Transverse colon (tissue), 4 donors: ENCODE measurements at regions of chr2 and their contacts with region 1.

Region 1: GRCh38 chr2:231706731-231707624 is 1.3 kb upstream of the PTMA start:
- DNase-seq: peak; percentile 98
- H3K4me3 ChIP-seq: peak overlapping the region; percentile 61 to 98 (median 74)
- H3K27ac ChIP-seq: peak overlapping the region; percentile 97 to 100 (median 100)
- H3K4me1 ChIP-seq: peaks cover 10 to 33% (median 20%) of the 10 kb centered on the region in 4 donors
- H3K27me3 ChIP-seq: no peaks in the 10 kb centered on the region
- CTCF ChIP-seq: peak; percentile 69 to 93 (median 89)
- EP300 ChIP-seq: no peak
- POLR2A ChIP-seq: peak; percentile 86

Region 2: DNA sequence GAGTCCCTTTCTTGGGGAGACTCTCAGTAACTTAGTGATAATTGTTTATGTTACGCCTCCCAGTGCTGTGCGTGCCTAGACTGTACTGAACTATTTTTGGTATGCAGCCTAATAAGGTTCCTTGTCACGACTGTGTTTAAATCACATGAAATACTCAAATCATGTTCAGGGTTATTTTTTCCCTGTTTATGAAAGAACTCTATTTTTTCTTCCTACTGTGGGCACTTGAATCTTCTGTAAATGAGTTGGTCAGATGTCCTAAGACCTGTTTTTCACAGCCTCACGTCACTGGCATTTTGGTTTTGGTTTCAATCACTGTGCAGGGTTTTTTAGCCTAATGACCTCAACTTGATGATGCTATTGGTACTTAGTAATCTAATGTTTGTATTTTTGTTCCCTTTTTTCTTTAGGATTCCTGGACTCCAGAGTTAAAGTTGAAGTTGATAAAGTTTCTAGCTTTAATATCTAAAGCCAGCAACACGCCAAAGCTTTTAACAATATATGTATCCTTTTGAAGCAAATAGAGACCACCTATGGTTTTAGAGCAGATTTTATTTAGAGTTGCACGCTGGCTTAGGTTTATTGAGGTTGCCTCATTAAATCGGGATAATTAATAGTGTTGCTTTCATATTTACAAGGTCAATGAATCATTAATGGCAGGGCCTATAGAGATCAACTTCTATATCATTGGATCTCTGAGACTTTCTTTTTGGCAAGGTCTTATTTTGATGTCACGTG is 484.5 kb before region 1 on chr2:
- in situ Hi-C with region 1: no loop called
- intact Hi-C with region 1: loop called (anchors 5 kb)
- DNase-seq: no peak
- H3K4me3 ChIP-seq: no peak overlapping the region
- H3K27ac ChIP-seq: peak overlapping the region; percentile 70 to 85 (median 82)
- H3K4me1 ChIP-seq: peaks cover 10 to 34% (median 24%) of the 10 kb centered on the region in 4 donors
- H3K27me3 ChIP-seq: no peaks in the 10 kb centered on the region
- CTCF ChIP-seq: no peak
- EP300 ChIP-seq: no peak
- POLR2A ChIP-seq: no peak

Region 3: GRCh38 chr2:231514103-231514950 is 192.7 kb before region 1 on chr2:
- in situ Hi-C with region 1: loop called in 1 of 4 experiments (anchors 25 kb)
- intact Hi-C with region 1: loop called (anchors 10 kb)
- DNase-seq: peak; percentile 98
- H3K4me3 ChIP-seq: peak overlapping the region; percentile 57 to 91 (median 59)
- H3K27ac ChIP-seq: peak overlapping the region; percentile 85 to 93 (median 89)
- H3K4me1 ChIP-seq: peaks cover 0 to 14% (median 6%) of the 10 kb centered on the region in 4 donors
- H3K27me3 ChIP-seq: no peaks in the 10 kb centered on the region
- CTCF ChIP-seq: no peak
- EP300 ChIP-seq: no peak
- POLR2A ChIP-seq: peak; percentile 86

Region 4: DNA sequence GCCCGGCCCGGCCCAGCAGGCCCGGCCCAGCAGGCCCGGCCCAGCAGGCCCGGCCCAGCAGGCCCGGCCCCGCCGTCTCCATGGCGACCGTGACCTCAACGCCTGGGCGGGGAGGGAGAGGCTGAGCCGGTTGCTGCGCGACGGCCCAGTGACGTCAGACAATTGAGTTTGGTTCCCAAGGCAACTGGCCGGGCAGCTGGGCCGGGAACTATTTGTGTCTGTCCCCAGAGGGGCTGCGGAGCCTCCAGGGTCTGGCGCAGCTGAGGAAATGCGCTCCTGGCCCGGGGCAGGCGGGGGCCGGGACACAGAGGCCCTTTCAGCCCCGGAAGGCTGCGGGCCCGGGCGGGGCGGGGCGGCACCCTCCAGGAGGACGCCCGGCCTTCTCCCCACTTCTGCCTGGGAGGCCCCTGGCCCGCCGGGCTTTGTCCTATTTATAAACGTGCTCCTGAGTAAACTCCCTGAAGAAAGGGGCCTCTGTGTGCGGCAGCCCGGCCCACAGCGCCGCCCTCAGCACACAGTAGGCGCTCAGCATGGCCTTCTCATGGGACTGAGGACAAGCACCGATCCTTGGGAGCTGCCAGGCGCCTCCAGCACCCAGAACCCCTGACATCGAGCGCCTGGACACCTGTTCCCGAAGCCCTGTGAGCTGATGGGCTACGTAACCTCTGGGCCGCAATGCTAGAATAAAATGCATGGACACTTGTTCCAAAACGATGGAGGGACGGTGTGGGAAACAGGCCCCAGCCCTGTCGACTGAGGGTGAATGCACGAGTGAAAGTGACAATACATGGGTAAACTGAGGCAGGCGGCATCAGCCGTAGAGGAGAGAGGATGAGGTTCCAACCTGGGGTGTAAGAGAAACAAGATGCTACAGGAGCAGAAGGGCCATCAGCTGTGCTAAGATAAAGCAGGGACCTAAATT is 102.0 kb before region 1 on chr2:
- in situ Hi-C with region 1: loop called in 1 of 4 experiments (anchors 5 kb)
- intact Hi-C with region 1: no loop called
- DNase-seq: peak; percentile 100
- H3K4me3 ChIP-seq: peak overlapping the region in 3 of 4 donors; percentile 39 to 55 (median 53)
- H3K27ac ChIP-seq: peak overlapping the region; percentile 96 to 99 (median 98)
- H3K4me1 ChIP-seq: peaks cover 18 to 44% (median 24%) of the 10 kb centered on the region in 4 donors
- H3K27me3 ChIP-seq: no peaks in the 10 kb centered on the region
- CTCF ChIP-seq: no peak
- EP300 ChIP-seq: peak; percentile 93
- POLR2A ChIP-seq: peak; percentile 58

Region 5: DNA sequence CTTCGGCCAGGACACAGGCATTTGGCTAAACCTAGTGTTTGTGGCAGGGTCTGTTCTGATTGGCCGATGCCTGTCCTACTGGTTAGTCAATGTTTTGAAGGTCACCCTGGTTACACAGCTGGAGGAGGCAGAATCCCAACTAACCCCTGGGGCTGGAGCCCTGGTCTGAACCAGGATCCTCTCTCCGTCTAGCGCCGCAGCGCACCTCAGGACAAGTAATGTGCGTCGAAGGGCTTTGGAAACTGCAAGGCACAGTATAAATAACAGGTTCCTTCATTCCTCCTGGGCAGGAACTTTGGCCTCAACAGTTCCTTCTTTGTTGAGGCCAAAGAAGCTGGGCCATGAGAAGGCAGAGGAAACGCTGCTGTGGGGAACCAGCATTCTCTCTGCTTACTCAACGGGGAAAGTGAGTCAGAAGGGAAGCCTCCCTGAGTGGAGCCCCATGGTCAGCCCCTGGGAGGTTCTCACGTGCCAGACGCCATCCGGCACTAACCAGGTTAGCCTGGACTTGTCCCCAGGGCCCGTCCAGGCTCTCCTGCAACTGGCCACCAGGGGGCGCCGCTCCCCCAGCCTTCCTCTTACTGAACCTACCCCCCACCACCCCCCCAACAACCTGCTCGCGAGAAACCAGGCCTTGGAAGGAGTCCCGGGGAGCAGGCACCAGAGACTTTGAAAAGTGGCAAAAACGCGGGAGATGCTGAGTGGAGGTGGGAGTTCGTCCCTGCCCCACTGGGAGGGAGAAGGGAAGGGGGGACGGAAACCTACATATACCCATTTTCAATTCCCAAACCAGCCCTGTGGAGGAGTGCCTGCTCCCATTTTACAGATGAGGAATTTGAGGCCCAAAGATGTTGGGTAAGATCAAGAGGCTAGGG is 94.6 kb before region 1 on chr2:
- in situ Hi-C with region 1: loop called in 1 of 4 experiments (anchors 5 kb)
- intact Hi-C with region 1: loop called (anchors 2 kb)
- DNase-seq: peak; percentile 96
- H3K4me3 ChIP-seq: no peak overlapping the region
- H3K27ac ChIP-seq: peak overlapping the region; percentile 93 to 98 (median 94)
- H3K4me1 ChIP-seq: peaks cover 29 to 57% (median 52%) of the 10 kb centered on the region in 4 donors
- H3K27me3 ChIP-seq: no peaks in the 10 kb centered on the region
- CTCF ChIP-seq: peak; percentile 97 to 99 (median 99)
- EP300 ChIP-seq: no peak
- POLR2A ChIP-seq: peak; percentile 32

Region 6: GRCh38 chr2:231674587-231675338 is 32.2 kb before region 1 on chr2:
- in situ Hi-C with region 1: loop called in 1 of 4 experiments (anchors 5 kb)
- intact Hi-C with region 1: no loop called
- DNase-seq: peak; percentile 83
- H3K4me3 ChIP-seq: no peak overlapping the region
- H3K27ac ChIP-seq: peak overlapping the region; percentile 96 to 100 (median 98)
- H3K4me1 ChIP-seq: peaks cover 49 to 63% (median 56%) of the 10 kb centered on the region in 4 donors
- H3K27me3 ChIP-seq: no peaks in the 10 kb centered on the region
- CTCF ChIP-seq: peak; percentile 76 to 94 (median 88)
- EP300 ChIP-seq: no peak
- POLR2A ChIP-seq: no peak

Region 7: GRCh38 chr2:232075080-232075479 is 368.1 kb after region 1 on chr2:
- in situ Hi-C with region 1: no loop called
- intact Hi-C with region 1: no loop called
- DNase-seq: no peak
- H3K4me3 ChIP-seq: no peak overlapping the region
- H3K27ac ChIP-seq: no peak overlapping the region
- H3K4me1 ChIP-seq: peaks cover 0 to 1% (median 0%) of the 10 kb centered on the region in 4 donors
- H3K27me3 ChIP-seq: no peaks in the 10 kb centered on the region
- CTCF ChIP-seq: no peak
- EP300 ChIP-seq: no peak
- POLR2A ChIP-seq: no peak